H1 (cell line): ENCODE measurements at regions of chr14 and their contacts with region 1.

Region 1: DNA sequence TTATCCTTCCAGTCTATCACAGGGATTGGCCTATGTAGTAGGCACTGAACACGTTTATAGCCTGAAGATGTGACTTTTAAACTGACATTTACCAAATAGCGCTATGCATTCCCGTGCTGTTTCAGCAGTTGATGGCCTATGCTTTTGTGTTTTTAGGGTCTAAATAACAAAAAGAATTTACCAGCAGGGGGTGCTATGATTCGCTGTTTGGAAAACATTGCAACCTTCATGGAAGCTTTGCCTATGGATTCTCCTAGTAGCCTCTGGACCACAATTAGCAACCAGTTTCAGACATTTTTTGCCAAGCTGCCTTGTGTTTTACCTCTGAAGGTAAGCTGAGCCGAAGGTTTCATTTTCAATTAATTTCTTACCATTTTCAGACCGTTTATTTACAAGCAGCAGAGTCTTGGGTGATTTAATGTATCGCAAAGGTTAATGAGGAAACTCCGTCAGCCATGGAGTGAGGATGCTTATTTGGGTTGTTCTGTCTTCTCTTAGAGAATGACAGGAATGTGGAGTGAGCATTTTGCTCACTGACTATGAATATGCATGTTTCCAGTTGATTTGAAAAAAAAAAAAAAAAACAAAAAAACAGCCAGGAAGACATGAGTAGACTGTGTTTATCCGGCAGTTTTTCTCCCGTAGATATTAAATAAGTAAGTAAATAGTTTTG is 133.1 kb downstream of the PRIMA1 start:
- DNase-seq: peak in 1 of 2 experiments; percentile 45
- H3K4me3 ChIP-seq: no peak overlapping the region
- H3K27ac ChIP-seq: no peak overlapping the region
- H3K4me1 ChIP-seq: peaks cover 0 to 8% (median 0%) of the 10 kb centered on the region in 4 experiments; a peak in 2 of 7 replicates
- H3K27me3 ChIP-seq: no peaks in the 10 kb centered on the region
- CTCF ChIP-seq: peak in 2 of 3 experiments; percentile 49 to 56; a peak in 3 of 4 replicates
- EP300 ChIP-seq: no peak
- POLR2A ChIP-seq: no peak
- RAD21 ChIP-seq: peak; percentile 77 to 80

Region 2: GRCh38 chr14:93346929-93347721 is 308.1 kb before region 1 on chr14 and contains the start of gene COX8C:
- CTCF ChIA-PET with region 1: no interaction called
- POLR2A ChIA-PET with region 1: no interaction called
- DNase-seq: no peak
- H3K4me3 ChIP-seq: no peak within 1 kb of the TSS
- H3K27ac ChIP-seq: no peak within 1 kb of the TSS
- H3K4me1 ChIP-seq: peaks cover 0 to 10% (median 5%) of the 10 kb centered on the region in 4 experiments; a peak in 4 of 7 replicates
- H3K27me3 ChIP-seq: no peaks in the 10 kb centered on the region
- CTCF ChIP-seq: peak in 2 of 3 experiments; percentile 16 to 31; a peak in 2 of 4 replicates
- EP300 ChIP-seq: no peak
- POLR2A ChIP-seq: no peak
- RAD21 ChIP-seq: 0 out of 4 replicates have a peak, but pooled peaks of 1 of the 2 experiments have one; percentile 1
- total RNA-seq, gene COX8C: not detected in 2 replicates

Region 3: GRCh38 chr14:93606091-93606490 is 49.1 kb before region 1 on chr14:
- CTCF ChIA-PET with region 1: no interaction called
- POLR2A ChIA-PET with region 1: no interaction called
- DNase-seq: no peak
- H3K4me3 ChIP-seq: no peak overlapping the region
- H3K27ac ChIP-seq: no peak overlapping the region
- H3K4me1 ChIP-seq: no peaks in the 10 kb centered on the region
- H3K27me3 ChIP-seq: no peaks in the 10 kb centered on the region
- CTCF ChIP-seq: no peak
- EP300 ChIP-seq: no peak
- POLR2A ChIP-seq: no peak
- RAD21 ChIP-seq: no peak

Region 4: GRCh38 chr14:93691042-93691780 is 36.0 kb after region 1 on chr14:
- CTCF ChIA-PET with region 1: interaction called, 47 read pairs
- POLR2A ChIA-PET with region 1: interaction called, 5 read pairs
- DNase-seq: no peak
- H3K4me3 ChIP-seq: no peak overlapping the region
- H3K27ac ChIP-seq: no peak overlapping the region
- H3K4me1 ChIP-seq: peaks cover 8 to 39% (median 28%) of the 10 kb centered on the region in 4 experiments
- H3K27me3 ChIP-seq: no peaks in the 10 kb centered on the region
- CTCF ChIP-seq: peak; percentile 53 to 66 (median 59)
- EP300 ChIP-seq: no peak
- POLR2A ChIP-seq: no peak
- RAD21 ChIP-seq: peak; percentile 42 to 56

Region 5: GRCh38 chr14:93778856-93779629 is 123.8 kb after region 1 on chr14:
- CTCF ChIA-PET with region 1: interaction called, 10 read pairs
- POLR2A ChIA-PET with region 1: no interaction called
- DNase-seq: no peak
- H3K4me3 ChIP-seq: no peak overlapping the region
- H3K27ac ChIP-seq: no peak overlapping the region
- H3K4me1 ChIP-seq: peaks cover 0 to 3% (median 0%) of the 10 kb centered on the region in 4 experiments; a peak in 2 of 7 replicates
- H3K27me3 ChIP-seq: no peaks in the 10 kb centered on the region
- CTCF ChIP-seq: no peak
- EP300 ChIP-seq: no peak
- POLR2A ChIP-seq: no peak
- RAD21 ChIP-seq: no peak

Region 6: GRCh38 chr14:93804646-93805045 is 149.4 kb after region 1 on chr14:
- CTCF ChIA-PET with region 1: interaction called, 19 read pairs
- POLR2A ChIA-PET with region 1: interaction called, 3 read pairs
- DNase-seq: peak in 1 of 2 experiments; percentile 91
- H3K4me3 ChIP-seq: no peak overlapping the region
- H3K27ac ChIP-seq: no peak overlapping the region
- H3K4me1 ChIP-seq: no peaks in the 10 kb centered on the region
- H3K27me3 ChIP-seq: no peaks in the 10 kb centered on the region; a peak in 1 of 7 replicates
- CTCF ChIP-seq: peak; percentile 79 to 93 (median 92)
- EP300 ChIP-seq: no peak
- POLR2A ChIP-seq: no peak
- RAD21 ChIP-seq: peak; percentile 71 to 78

Region 7: GRCh38 chr14:93906341-93907329 is 251.4 kb after region 1 on chr14:
- CTCF ChIA-PET with region 1: interaction called, 149 read pairs
- POLR2A ChIA-PET with region 1: interaction called, 5 read pairs
- DNase-seq: peak; percentile 47 to 87
- H3K4me3 ChIP-seq: no peak overlapping the region
- H3K27ac ChIP-seq: no peak overlapping the region
- H3K4me1 ChIP-seq: peaks cover 0 to 7% (median 3%) of the 10 kb centered on the region in 4 experiments; a peak in 4 of 7 replicates
- H3K27me3 ChIP-seq: no peaks in the 10 kb centered on the region; a peak in 1 of 7 replicates
- CTCF ChIP-seq: peak; percentile 75 to 93 (median 91)
- EP300 ChIP-seq: no peak
- POLR2A ChIP-seq: no peak
- RAD21 ChIP-seq: peak; percentile 90